ENCODE measurements at regions of chr4 and their contacts with region 1.

Region 1: DNA sequence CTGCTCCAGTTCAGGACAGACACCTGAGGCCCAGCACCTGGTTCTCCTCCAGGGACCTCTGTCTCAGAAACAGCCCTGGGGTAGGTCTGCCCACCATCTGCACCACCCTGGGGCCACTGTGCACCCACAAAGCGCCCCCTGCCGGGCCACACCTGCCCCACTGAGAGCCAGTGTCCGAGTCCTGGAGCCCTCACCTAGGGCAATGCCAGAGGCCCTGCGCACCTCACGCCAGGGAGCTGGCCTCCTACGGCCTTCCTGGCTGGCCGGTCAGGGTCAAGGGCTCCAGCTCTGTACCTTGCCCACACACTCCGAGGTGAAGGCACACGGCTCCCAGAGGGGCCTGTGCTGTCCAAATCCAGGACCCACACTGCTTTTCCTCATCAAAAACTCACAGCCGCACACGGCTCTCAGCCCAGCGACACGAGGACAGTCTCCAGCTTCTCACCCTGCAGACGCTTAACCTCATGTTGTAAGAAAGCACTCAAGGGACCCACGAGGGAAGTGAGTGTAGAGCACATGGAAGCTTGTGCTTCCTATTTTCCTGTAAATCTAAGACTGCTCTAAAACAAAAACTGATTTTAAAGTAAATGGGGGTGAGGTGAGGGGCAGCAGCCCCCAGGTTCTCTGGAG is 5.4 kb downstream of the CTBP1 start:
- DNase-seq: no peak
- H3K4me3 ChIP-seq: no peak overlapping the region
- H3K27ac ChIP-seq: no peak overlapping the region
- H3K4me1 ChIP-seq: peaks cover 30% of the 10 kb centered on the region
- H3K27me3 ChIP-seq: no peaks in the 10 kb centered on the region
- CTCF ChIP-seq: no peak

Region 2: GRCh38 chr4:1207603-1208265 is 35.8 kb before region 1 on chr4:
- intact Hi-C with region 1: loop called (anchors 5 kb)
- DNase-seq: peak; percentile 64
- H3K4me3 ChIP-seq: no peak overlapping the region
- H3K27ac ChIP-seq: peak overlapping the region; percentile 63
- H3K4me1 ChIP-seq: peaks cover 47% of the 10 kb centered on the region
- H3K27me3 ChIP-seq: no peaks in the 10 kb centered on the region
- CTCF ChIP-seq: no peak

Measured in colonic mucosa (tissue), 4 donors.